Activated CD8-positive, alpha-beta T cell treated with anti-CD3 and anti-CD28 coated beads, Interleukin-2, amount 10 ng/mL, durations not matched to agents 7 days and 5 days (primary cell): ENCODE measurements at regions of chr17 and their contacts with region 1.

Region 1: GRCh38 chr17:63827002-63827771 is at the starts of genes FTSJ3 and PSMC5:
- DNase-seq: peak; percentile 97
- ATAC-seq: peak; percentile 94
- H3K4me3 Mint-ChIP-seq: peak within 1 kb of the TSS; percentile 97
- H3K27ac Mint-ChIP-seq: peak within 1 kb of the TSS; percentile 100
- H3K4me1 Mint-ChIP-seq: peaks cover 81% of the 10 kb centered on the region
- H3K27me3 Mint-ChIP-seq: no peaks in the 10 kb centered on the region
- total RNA-seq, gene FTSJ3: 58.7 to 62.2 TPM
- total RNA-seq, gene PSMC5: 176 to 179 TPM

Region 2: GRCh38 chr17:63842540-63843386 is 15.6 kb after region 1 on chr17 and contains the start of gene SMARCD2:
- CTCF ChIA-PET with region 1: interaction called, 56 read pairs
- POLR2A ChIA-PET with region 1: interaction called, 124 read pairs
- DNase-seq: peak; percentile 99
- ATAC-seq: peak; percentile 90
- H3K4me3 Mint-ChIP-seq: peak within 1 kb of the TSS; percentile 97
- H3K27ac Mint-ChIP-seq: peak within 1 kb of the TSS; percentile 94
- H3K4me1 Mint-ChIP-seq: peaks cover 36% of the 10 kb centered on the region
- H3K27me3 Mint-ChIP-seq: no peaks in the 10 kb centered on the region
- total RNA-seq, gene SMARCD2: 130 to 136 TPM

Region 3: DNA sequence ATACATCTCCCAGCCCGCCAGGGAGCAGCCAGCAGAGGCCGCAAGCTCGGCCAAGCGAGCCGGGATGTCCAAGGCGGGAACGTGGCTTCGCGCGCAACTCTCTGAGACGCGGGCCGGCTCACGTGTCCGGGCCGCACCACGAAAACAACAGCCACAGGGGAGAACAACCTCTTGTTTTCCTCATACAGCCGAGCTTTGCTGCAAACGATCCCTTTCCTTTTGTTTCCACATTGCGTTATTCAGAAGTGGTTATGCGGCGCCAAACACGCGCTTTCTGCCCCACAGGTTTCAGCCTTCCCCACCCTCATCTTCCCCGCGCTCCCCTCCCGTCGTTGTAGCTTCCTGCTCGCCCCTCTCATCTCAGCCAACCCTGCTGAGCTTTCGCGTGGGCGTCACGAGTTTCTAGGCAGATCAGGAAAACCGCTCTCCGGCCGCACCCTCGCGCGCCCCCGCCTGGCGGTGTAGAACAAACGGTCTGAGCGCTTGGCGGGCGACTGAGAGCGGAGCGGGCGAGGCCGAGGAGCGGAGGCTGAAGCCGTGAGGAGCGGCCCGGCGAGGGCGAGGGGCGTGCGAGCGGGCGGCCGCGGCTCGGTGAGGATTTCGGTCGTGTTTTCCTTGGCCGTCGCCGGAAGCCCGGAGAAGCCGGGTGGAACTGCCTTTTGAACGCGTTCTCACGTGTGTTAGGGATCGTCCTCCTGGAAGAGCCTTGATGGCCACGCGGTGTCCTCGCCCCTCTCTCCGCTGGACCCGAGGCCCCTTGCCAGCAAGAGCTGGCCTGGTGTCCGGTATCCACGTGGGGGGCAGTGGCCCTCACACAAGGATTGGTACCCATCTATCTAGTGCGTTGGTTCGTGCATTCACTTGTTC is 21.9 kb after region 1 on chr17:
- CTCF ChIA-PET with region 1: interaction called, 12 read pairs
- POLR2A ChIA-PET with region 1: interaction called, 124 read pairs
- DNase-seq: peak; percentile 96
- ATAC-seq: peak; percentile 97
- H3K4me3 Mint-ChIP-seq: peak overlapping the region; percentile 63
- H3K27ac Mint-ChIP-seq: peak overlapping the region; percentile 97
- H3K4me1 Mint-ChIP-seq: peaks cover 21% of the 10 kb centered on the region
- H3K27me3 Mint-ChIP-seq: peaks cover 14% of the 10 kb centered on the region